Mammary epithelial cell (primary cell): ENCODE measurements at regions of chr20 and their contacts with region 1.

Region 1: GRCh38 chr20:22846863-22847262 is 188.2 kb upstream of the SSTR4 start:
- DNase-seq: no peak
- H3K4me3 ChIP-seq: no peak overlapping the region
- H3K27ac ChIP-seq: no peak overlapping the region
- H3K4me1 ChIP-seq: no peaks in the 10 kb centered on the region
- H3K27me3 ChIP-seq: no peaks in the 10 kb centered on the region
- CTCF ChIP-seq: no peak

Region 2: GRCh38 chr20:22716821-22717351 is 130.0 kb before region 1 on chr20:
- CTCF ChIA-PET with region 1: no interaction called
- dilution Hi-C with region 1: loop called (anchors 5 kb)
- in situ Hi-C with region 1: no loop called
- intact Hi-C with region 1: no loop called
- DNase-seq: no peak
- H3K4me3 ChIP-seq: no peak overlapping the region
- H3K27ac ChIP-seq: no peak overlapping the region
- H3K4me1 ChIP-seq: peaks cover 14% of the 10 kb centered on the region
- H3K27me3 ChIP-seq: no peaks in the 10 kb centered on the region
- CTCF ChIP-seq: no peak